ENCODE measurements at regions of chr6 and their contacts with region 1.

Region 1: DNA sequence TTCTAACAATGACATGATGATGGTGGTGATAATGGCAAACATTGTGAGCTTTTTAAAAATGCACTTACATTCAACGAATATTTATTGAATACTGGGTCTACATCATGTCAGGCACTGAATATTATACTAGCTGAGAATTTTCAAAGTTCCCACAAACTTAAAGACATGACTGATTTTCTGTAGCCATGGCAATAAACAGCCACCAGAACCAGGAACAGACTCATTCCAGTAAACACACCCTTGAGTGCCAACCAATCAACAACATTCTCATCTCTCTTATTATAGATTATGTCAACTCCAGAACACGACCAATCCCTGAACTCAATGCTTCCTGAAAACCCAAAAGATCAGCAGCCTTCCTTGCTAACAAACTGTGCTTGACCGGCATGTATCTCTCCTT is 212.4 kb upstream of the RUNX2 start:
- DNase-seq: no peak
- ATAC-seq: no peak

Region 2: GRCh38 chr6:44805238-44805846 is 310.4 kb before region 1 on chr6:
- intact Hi-C with region 1: no loop called
- DNase-seq: no peak
- ATAC-seq: no peak

Region 3: GRCh38 chr6:44917430-44917829 is 198.3 kb before region 1 on chr6:
- intact Hi-C with region 1: no loop called
- DNase-seq: no peak
- ATAC-seq: no peak

Region 4: GRCh38 chr6:45155341-45155894 is 39.7 kb after region 1 on chr6:
- intact Hi-C with region 1: loop called (anchors 2 kb)
- DNase-seq: no peak
- ATAC-seq: no peak

Region 5: GRCh38 chr6:45351667-45352066 is 236.0 kb after region 1 on chr6:
- intact Hi-C with region 1: no loop called
- DNase-seq: no peak
- ATAC-seq: no peak

Measured in sciatic nerve (tissue), 2 donors.